ENCODE measurements at regions of chr17 and their contacts with region 1.

Region 1: DNA sequence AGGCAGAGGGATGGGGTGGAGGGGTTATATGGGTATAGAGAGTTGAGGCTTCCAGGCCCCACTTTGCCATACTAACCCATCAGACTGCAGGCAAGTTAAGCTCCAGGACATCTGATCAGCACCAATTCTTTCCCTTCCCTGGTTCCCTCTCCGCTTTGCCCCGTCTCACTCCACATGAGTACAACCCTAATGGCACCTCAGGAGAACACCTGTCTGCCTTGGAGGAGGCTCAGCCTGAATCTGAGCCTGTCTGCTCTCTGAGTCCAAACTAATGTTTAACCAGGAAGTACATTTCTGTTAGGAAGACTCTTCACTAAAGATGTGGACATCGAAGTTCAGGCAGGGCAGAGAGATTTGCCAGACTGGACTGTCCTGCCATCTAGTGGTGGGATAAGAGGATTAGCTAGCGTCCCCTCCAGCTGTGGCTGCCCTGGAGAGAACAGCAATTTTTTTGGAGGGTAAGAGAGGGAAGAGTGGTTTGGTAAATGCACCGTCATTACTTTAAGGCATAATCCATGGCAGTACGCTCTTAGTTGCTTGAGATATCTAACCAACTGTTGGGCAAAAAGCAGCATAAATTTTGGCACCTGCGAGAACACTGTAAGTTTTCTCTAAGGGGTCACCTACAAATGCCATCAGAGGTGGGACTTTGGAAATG is 29.2 kb upstream of the LRRC75A start:
- DNase-seq: peak; percentile 80
- ATAC-seq: peak; percentile 92

Region 2: GRCh38 chr17:16304830-16305229 is 216.4 kb before region 1 on chr17:
- intact Hi-C with region 1: no loop called
- DNase-seq: no peak
- ATAC-seq: no peak

Region 3: GRCh38 chr17:16453493-16453851 is 67.7 kb before region 1 on chr17:
- intact Hi-C with region 1: loop called (anchors 5 kb)
- DNase-seq: no peak
- ATAC-seq: no peak

Region 4: GRCh38 chr17:17440010-17440843 is 919.0 kb after region 1 on chr17:
- intact Hi-C with region 1: loop called (anchors 10 kb)
- DNase-seq: no peak
- ATAC-seq: no peak

Measured in sciatic nerve (tissue), 2 donors.